ENCODE measurements at regions of chr12 and their contacts with region 1.

Region 1: GRCh38 chr12:93979189-93979588 is 169.2 kb upstream of the PLXNC1 start:
- DNase-seq: no peak
- ATAC-seq: peak; percentile 34

Region 2: GRCh38 chr12:93502802-93503623 is 476.2 kb before region 1 on chr12:
- intact Hi-C with region 1: loop called (anchors 10 kb)
- DNase-seq: no peak
- ATAC-seq: no peak

Region 3: GRCh38 chr12:93766796-93767523 is 212.2 kb before region 1 on chr12:
- intact Hi-C with region 1: loop called (anchors 10 kb)
- DNase-seq: no peak
- ATAC-seq: peak; percentile 78

Region 4: DNA sequence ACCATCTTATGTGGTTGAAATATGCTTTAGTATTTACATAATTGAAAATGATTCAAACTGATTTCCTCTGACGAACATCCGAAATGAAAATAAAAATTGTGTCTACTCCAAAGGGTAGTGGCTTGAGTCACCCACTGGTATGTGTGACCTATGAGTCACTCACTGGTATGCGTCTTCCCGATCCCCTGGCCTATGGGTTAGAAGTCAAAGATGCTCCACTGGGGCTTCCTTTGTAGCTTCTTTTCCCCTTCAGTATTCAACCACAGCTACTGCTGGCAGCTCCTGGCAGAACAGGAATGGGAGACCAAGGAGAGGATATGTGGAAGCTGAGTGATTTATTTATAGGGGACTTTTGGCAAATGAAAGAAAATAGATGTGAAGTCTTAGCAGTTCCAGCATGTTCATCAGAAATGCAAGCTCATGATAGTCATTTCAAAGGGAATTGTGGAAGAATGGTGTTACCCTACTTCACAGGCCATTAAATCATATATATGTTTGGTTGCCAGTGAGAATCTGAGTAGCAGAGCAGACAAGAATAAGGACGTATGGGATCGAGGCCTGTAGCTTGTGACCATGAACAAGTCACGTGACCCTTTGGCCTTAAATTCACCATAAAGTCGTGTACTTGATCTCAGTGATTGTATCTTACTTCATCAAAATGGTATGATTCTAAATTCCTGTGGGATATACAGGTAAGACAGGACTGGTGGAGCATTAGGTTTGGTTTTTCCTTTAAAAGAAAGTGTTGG is 193.8 kb before region 1 on chr12:
- intact Hi-C with region 1: no loop called
- DNase-seq: no peak
- ATAC-seq: peak; percentile 83

Region 5: DNA sequence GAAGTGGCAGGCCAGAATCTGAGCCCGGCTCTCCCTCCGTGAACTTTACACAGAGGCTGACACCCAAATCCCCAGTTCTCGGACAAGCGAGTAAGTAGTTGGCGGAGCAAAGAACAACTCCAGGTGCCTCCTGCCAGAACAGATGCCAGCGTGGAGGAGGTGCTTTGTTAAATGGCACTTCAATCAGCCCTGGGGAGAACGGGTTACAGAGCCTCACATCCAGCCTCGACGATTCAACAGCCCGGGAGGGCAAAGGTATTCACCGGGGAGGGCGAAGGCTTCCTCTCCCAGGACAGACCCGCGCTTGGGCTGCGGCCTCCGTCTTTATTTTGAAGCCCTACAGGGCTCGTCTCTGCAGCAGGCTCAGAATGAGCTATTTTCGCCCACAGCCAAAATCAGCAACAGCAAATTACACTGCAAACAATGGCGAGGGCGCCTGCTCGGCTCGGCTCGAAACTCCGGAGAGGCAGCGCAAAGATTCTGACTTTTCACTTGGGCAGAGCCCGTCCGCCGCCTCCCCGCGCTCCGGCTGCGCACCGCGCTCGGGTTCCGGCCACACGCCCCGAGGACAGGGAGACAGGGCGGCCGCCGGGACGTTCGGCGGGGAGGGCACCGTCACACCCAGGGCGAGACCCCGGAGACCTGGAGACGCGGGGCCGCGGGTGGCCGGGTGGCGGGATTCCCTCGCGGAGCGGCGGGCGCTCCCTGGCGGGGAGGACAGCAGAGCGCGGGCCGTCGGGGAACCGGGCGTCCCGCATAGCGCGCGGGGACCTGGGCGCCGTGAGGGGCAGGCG is 670.4 kb after region 1 on chr12:
- intact Hi-C with region 1: no loop called
- DNase-seq: peak; percentile 72
- ATAC-seq: peak; percentile 84

Measured in Right ventricle myocardium superior (tissue), 1 donor.